MCF 10A (cell line): ENCODE measurements at regions of chr9 and their contacts with region 1.

Region 1: GRCh38 chr9:3467593-3468219 is 58.1 kb downstream of the RFX3 start:
- DNase-seq: peak; percentile 76
- H3K4me3 Mint-ChIP-seq: no peak overlapping the region
- H3K27ac Mint-ChIP-seq: no peak overlapping the region
- H3K4me1 Mint-ChIP-seq: no peaks in the 10 kb centered on the region
- H3K27me3 Mint-ChIP-seq: no peaks in the 10 kb centered on the region
- CTCF ChIP-seq: peak; percentile 87

Region 2: DNA sequence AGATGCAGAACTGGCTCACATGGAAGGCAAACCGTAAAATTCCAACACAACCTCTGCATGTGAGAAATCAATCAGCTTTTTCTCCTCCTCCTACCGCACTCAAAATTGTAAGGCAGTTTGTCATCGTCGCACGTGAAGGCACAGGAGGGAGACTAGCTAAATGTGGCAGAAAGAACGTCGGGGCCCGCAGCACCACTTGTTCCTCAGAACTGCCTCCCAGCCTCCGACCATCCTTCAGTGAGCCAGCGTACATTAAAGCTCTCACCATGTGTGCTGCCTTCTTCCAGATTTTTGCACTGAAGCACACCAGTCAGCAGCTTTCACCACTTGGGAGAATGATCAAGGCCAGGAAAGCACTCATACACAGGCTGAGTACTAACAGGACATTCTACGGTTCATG is 47.8 kb before region 1 on chr9:
- CTCF ChIA-PET with region 1: no interaction called
- POLR2A ChIA-PET with region 1: no interaction called
- intact Hi-C with region 1: no loop called
- DNase-seq: no peak
- H3K4me3 Mint-ChIP-seq: no peak overlapping the region
- H3K27ac Mint-ChIP-seq: no peak overlapping the region
- H3K4me1 Mint-ChIP-seq: no peaks in the 10 kb centered on the region
- H3K27me3 Mint-ChIP-seq: no peaks in the 10 kb centered on the region
- CTCF ChIP-seq: no peak

Region 3: DNA sequence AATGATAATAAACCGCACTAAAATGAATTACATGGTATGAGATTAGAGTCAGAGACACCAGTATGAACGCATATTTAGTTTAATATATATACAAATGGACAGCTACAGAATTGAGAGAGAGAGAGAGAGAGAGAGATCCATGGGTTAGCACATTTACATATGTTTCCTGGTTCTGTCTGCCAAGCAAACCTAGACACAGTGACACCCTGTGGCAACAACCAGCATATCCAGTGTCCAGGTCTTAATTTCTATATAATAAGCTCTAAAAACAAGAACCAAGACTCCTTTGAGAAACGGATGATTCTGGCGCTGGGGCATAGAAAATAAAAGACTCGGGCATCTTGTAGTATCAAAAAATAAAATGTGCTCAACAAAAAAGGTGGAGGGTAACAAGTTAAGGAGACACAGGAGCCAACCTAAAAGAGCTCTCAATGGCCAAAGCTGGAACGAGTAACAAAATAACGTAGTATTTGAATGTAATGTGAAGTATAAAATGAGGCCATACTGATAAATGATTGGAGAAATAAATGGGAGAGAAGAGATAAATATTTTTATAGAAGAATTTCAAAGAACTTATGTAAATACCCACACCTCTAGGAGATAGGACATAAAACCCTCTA is 26.4 kb before region 1 on chr9:
- CTCF ChIA-PET with region 1: interaction called, 13 read pairs
- POLR2A ChIA-PET with region 1: no interaction called
- intact Hi-C with region 1: no loop called
- DNase-seq: peak; percentile 68
- H3K4me3 Mint-ChIP-seq: no peak overlapping the region
- H3K27ac Mint-ChIP-seq: no peak overlapping the region
- H3K4me1 Mint-ChIP-seq: peaks cover 8% of the 10 kb centered on the region
- H3K27me3 Mint-ChIP-seq: no peaks in the 10 kb centered on the region
- CTCF ChIP-seq: peak; percentile 52

Region 4: DNA sequence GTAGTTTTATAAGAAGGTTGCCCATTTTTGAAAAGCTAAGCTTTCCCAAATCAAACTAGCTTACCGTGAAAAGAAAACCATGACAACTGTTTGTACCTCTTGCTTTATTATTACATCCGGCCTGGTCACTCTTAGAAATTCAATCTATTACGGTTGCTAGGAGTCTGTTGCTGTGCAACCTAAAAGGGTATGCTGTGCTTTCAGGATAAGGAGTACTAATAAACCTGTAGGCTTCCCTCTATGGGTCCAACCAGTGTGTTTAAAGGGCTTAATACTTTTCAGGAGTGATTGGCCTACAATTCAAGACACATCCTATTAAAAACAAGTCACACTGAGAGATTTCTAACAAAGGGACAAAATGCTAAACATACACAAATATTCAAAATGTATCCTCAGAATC is 31.0 kb after region 1 on chr9:
- CTCF ChIA-PET with region 1: interaction called, 12 read pairs
- POLR2A ChIA-PET with region 1: no interaction called
- intact Hi-C with region 1: no loop called
- DNase-seq: no peak
- H3K4me3 Mint-ChIP-seq: no peak overlapping the region
- H3K27ac Mint-ChIP-seq: no peak overlapping the region
- H3K4me1 Mint-ChIP-seq: peaks cover 14% of the 10 kb centered on the region
- H3K27me3 Mint-ChIP-seq: no peaks in the 10 kb centered on the region
- CTCF ChIP-seq: no peak

Region 5: GRCh38 chr9:3516667-3517330 is 49.1 kb after region 1 on chr9:
- CTCF ChIA-PET with region 1: interaction called, 16 read pairs
- POLR2A ChIA-PET with region 1: interaction called, 5 read pairs
- intact Hi-C with region 1: no loop called
- DNase-seq: no peak
- H3K4me3 Mint-ChIP-seq: no peak overlapping the region
- H3K27ac Mint-ChIP-seq: no peak overlapping the region
- H3K4me1 Mint-ChIP-seq: peaks cover 14% of the 10 kb centered on the region
- H3K27me3 Mint-ChIP-seq: no peaks in the 10 kb centered on the region
- CTCF ChIP-seq: no peak

Region 6: GRCh38 chr9:3647652-3648051 is 179.9 kb after region 1 on chr9:
- CTCF ChIA-PET with region 1: interaction called, 3 read pairs
- POLR2A ChIA-PET with region 1: no interaction called
- intact Hi-C with region 1: loop called (anchors 10 kb)
- DNase-seq: no peak
- H3K4me3 Mint-ChIP-seq: no peak overlapping the region
- H3K27ac Mint-ChIP-seq: no peak overlapping the region
- H3K4me1 Mint-ChIP-seq: no peaks in the 10 kb centered on the region
- H3K27me3 Mint-ChIP-seq: no peaks in the 10 kb centered on the region
- CTCF ChIP-seq: no peak

Region 7: DNA sequence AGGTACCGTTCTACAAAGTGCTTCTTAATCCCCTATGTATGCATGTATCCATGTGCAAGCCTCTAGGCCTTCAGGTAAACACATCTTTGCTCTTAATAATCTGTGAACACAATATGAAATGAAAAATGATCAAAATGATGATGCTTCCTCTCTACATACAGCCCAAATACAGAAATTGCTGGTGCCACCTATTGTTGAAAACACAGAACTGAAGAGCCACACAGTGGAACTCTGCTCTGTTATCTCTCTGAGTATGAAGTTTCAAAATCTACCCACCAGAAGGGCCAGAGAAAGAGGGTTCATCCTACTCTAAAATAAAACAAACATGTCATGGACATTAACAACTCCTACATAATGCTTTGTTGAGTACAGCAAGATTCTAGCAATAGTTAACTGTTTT is 760.9 kb after region 1 on chr9:
- CTCF ChIA-PET with region 1: interaction called, 5 read pairs
- POLR2A ChIA-PET with region 1: no interaction called
- intact Hi-C with region 1: loop called (anchors 2 kb)
- DNase-seq: peak; percentile 48
- H3K4me3 Mint-ChIP-seq: no peak overlapping the region
- H3K27ac Mint-ChIP-seq: peak overlapping the region; percentile 76
- H3K4me1 Mint-ChIP-seq: no peaks in the 10 kb centered on the region
- H3K27me3 Mint-ChIP-seq: no peaks in the 10 kb centered on the region
- CTCF ChIP-seq: peak; percentile 62

Region 8: DNA sequence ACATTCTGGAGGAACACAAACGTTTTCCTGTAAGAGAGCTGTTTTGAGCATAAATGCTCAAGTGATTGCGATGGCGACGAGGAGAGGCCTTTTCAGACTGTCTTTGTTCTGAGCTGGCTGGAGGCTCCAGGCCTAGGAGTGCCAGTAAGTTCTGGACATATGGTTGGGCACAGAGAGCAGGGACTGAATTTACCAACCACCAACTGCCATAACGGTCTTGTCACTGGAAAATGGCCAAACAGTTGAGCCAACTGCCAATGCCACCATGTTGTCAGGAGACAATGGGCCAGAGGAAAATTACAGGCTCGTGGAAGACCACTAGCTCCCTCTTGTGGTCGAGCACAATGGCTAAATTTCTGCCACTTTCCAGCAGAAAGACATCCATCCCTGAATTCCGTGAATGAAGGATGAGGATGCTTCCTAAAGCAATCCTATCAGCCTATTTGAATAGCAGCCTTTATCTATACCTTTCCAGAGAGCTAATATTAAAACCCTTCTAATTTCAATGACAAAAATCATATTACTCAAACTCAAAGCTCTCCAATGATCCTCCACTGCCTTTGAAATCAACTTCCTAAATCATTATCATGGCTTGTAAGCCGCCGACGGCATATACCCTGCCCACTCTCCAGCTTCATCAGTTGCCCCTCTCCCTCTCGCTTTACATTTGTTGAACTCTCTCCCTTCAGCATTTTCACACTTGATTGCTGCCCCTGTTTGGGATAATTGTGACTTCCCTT is 899.1 kb after region 1 on chr9:
- CTCF ChIA-PET with region 1: interaction called, 3 read pairs
- POLR2A ChIA-PET with region 1: no interaction called
- intact Hi-C with region 1: loop called (anchors 1 kb)
- DNase-seq: peak; percentile 52
- H3K4me3 Mint-ChIP-seq: no peak overlapping the region
- H3K27ac Mint-ChIP-seq: no peak overlapping the region
- H3K4me1 Mint-ChIP-seq: no peaks in the 10 kb centered on the region
- H3K27me3 Mint-ChIP-seq: peaks cover 3% of the 10 kb centered on the region
- CTCF ChIP-seq: peak; percentile 80

Region 9: GRCh38 chr9:4662108-4662988 is 1194.6 kb after region 1 on chr9 and contains the start of gene PLPP6:
- CTCF ChIA-PET with region 1: no interaction called
- POLR2A ChIA-PET with region 1: no interaction called
- intact Hi-C with region 1: no loop called
- DNase-seq: peak; percentile 93
- H3K4me3 Mint-ChIP-seq: peak within 1 kb of the TSS; percentile 72
- H3K27ac Mint-ChIP-seq: peak within 1 kb of the TSS; percentile 65
- H3K4me1 Mint-ChIP-seq: peaks cover 40% of the 10 kb centered on the region
- H3K27me3 Mint-ChIP-seq: no peaks in the 10 kb centered on the region
- CTCF ChIP-seq: peak; percentile 29
- total RNA-seq, gene PLPP6: 6.3 and 8.3 TPM in 2 replicates